ENCODE measurements at regions of chr6 and their contacts with region 1.

Region 1: DNA sequence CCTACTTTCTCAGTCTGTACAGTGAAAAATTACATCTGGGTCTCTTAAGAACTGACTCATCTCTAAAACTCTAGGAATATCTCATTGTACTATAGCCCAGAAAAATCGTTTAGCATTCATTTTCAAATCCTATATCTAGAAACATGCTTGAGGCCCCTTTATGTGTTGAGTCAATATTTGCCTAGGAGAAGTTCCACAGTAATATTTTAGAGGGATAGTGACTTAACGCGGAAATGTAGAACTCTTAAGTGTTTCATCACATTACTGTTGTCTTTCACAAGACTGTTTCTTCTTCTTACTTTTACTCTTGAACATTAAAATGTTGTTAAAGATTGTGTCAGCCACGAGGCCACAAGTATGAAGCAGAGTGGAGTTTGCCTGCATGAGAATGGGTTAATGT is 23.0 kb upstream of the MYLIP start:
- DNase-seq: no peak
- H3K4me3 ChIP-seq: no peak overlapping the region
- H3K27me3 ChIP-seq: no peaks in the 10 kb centered on the region; the same call in 1 of the 2 replicates
- CTCF ChIP-seq: no peak

Region 2: DNA sequence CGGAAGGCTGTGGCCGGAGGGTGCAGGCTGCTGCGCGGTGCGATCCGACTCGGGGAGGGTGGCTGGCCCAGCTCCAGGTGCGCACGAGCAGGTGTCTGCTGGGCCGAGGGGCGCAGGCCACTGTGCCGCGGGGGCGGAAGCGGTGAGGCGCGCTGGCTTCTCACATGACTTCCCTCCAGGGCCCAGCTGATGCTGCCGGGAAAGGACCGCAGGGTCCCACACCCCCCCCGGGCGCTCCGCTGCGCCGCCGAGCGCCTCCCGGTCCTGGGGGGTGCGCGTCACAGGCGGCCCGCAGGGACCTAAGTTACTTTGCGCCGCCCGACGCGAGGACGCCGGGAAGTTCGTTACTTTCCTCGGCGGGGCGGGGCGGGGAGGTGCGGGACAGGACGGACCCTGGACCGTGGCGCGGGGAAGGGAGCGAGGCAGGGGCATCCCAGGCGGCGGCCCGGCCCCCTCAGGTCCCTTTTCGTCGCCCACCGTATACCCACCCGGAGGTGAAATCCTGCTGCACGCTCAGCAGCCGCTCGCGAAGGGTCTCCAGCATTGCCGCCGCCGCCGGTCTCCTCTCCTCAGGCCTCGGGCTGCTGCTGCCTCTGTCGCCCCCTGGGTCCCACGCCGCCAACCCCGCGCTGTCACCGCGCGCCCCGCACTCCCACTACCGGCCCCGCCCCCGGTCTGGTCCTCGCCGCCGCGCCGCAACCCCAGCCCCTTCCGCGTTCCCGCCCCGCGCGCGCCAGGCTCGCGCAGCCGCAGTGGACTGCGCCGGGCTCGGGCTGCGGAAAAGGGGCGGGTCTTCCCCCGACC is 443.3 kb before region 1 on chr6 and contains the start of gene DTNBP1:
- CTCF ChIA-PET with region 1: no interaction called
- POLR2A ChIA-PET with region 1: interaction called, 12 read pairs
- DNase-seq: peak; percentile 9
- H3K4me3 ChIP-seq: peak within 1 kb of the TSS; percentile 93
- H3K27me3 ChIP-seq: peaks cover 2% of the 10 kb centered on the region
- CTCF ChIP-seq: no peak
- polyA plus RNA-seq, gene DTNBP1: 15.8 and 19.1 TPM in 2 replicates

Measured in BJ (cell line).